HEK293 (cell line): ENCODE measurements at regions of chr15 and their contacts with region 1.

Region 1: DNA sequence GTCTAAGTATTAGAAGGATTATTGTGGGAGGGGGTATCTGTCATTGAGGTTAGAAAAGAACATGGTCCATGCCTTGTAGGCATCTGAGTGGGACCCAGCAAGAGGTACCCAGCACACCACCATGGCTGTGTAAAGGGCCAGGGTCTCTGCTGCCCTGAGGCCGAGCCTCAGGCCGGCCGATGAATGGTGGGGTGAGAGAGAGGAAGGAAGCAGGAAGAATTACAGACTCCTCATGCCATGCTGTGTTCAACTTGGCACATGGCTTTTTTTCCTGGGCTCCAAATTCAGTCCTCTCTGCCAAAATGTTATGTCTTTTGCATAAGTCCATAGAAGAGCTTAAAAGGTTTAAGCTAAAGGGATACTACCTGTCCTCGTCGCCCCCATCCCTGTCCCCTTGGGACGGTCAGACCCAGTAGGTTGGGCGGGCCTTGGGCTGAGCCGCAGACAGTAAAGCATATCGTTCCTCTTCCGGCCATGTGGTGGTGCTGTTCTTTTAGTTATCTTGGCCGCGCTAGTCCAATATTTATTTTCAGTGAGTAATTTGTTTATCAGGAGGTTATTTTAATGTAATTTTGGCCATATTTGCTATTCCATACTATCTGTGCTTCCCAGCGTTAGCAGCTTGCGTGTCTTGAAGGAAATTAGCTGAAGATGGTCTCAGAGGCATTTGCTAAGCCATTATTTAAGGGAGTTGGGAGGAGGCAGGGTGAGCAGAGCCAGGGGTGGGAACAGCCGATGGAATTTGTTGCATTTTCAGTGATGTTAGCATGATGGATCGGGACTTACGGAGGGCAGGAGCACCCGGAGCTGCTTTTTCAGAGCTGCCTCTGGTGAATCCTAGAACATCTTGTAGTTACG is 152.4 kb downstream of the AGBL1 start:
- H3K4me3 ChIP-seq: no peak overlapping the region
- H3K27ac ChIP-seq: peak overlapping the region; percentile 4; the same call in 1 of the 2 replicates
- H3K4me1 ChIP-seq: peaks cover 6% of the 10 kb centered on the region; the same call in 1 of the 2 replicates
- CTCF ChIP-seq: no peak

Region 2: DNA sequence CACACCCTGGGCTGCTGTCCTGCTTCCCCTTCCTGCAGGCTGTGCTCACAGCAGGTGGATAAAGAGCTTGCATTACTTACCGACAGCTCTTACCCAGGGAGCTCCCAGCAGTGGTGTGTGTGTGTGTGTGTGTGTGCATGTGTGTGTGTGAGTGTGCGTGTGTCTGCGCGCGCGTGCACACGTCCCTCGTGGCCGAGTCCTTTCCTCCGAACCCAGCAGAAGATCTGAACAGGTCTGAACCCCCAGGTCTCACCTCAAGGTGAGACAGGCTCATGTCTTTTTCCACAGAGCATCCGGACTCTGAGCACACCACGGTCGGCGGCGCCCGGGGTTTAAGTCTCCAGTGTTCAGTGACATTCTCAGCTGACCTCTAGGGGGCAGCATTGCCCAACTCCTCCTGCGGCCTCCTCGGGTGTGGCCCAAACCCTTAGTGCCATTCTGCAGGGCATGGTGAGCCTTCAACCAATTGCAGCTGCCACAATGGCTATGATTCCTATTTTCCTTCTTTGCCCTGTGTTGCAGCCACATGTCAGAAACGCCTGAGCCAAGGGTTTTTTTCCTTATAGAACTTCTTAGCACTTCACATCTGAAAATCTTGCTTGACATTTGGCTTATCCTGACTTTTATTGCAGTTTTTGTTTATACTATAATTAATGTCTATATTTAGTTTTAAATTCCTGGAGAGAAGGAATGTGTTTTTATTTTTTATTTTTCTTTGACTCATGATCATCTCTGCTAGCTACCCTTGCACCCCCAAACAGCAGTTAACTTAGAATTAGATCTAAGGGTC is 373.3 kb before region 1 on chr15:
- CTCF ChIA-PET with region 1: interaction called, 13 read pairs
- POLR2A ChIA-PET with region 1: no interaction called
- H3K4me3 ChIP-seq: peak overlapping the region; percentile 14
- H3K27ac ChIP-seq: no peak overlapping the region
- H3K4me1 ChIP-seq: no peaks in the 10 kb centered on the region
- CTCF ChIP-seq: peak; percentile 85

Region 3: GRCh38 chr15:86115144-86115801 is 116.8 kb before region 1 on chr15:
- CTCF ChIA-PET with region 1: interaction called, 11 read pairs
- POLR2A ChIA-PET with region 1: no interaction called
- H3K4me3 ChIP-seq: no peak overlapping the region
- H3K27ac ChIP-seq: no peak overlapping the region
- H3K4me1 ChIP-seq: no peaks in the 10 kb centered on the region
- CTCF ChIP-seq: no peak

Region 4: GRCh38 chr15:86221119-86221518 is 11.0 kb before region 1 on chr15:
- CTCF ChIA-PET with region 1: interaction called, 22 read pairs
- POLR2A ChIA-PET with region 1: no interaction called
- H3K4me3 ChIP-seq: no peak overlapping the region
- H3K27ac ChIP-seq: no peak overlapping the region
- H3K4me1 ChIP-seq: no peaks in the 10 kb centered on the region
- CTCF ChIP-seq: no peak

Region 5: GRCh38 chr15:86247249-86247955 is 15.3 kb after region 1 on chr15:
- CTCF ChIA-PET with region 1: interaction called, 13 read pairs
- POLR2A ChIA-PET with region 1: no interaction called
- H3K4me3 ChIP-seq: no peak overlapping the region
- H3K27ac ChIP-seq: no peak overlapping the region
- H3K4me1 ChIP-seq: no peaks in the 10 kb centered on the region
- CTCF ChIP-seq: no peak

Region 6: DNA sequence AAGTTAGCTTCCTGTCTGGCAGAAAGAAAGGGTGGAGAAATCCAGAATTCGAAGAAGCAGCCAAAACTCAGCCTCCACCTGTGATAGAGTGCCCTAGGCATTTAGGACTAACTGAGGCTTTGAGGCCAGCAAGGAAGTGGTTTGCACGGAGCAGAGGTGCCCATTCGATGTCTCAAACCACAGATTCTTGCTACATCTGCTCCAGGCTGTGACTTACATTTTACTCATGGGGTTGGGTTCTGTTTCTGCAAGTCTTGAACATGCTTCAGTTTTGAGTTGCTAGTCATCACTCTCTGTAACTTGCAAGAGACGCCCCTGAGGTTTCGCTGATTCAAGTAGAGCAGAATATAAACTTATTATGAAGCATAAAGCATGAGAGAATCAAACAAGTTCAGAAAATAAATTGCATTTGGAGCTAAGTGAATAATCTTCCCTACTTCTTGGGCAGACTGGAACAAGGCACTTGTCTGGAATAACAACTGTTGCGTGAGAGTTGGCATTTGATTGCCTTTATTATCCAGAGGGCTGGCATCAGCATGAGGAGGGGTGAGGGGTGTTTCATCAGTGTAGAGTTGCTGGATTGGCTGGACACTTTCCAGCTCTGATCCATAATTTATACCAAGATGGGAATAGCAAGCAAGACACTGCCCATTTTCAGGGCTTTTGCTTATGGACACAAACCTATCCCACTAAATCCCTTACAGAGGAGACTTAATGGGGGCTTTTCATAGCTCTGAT is 104.1 kb after region 1 on chr15:
- CTCF ChIA-PET with region 1: no interaction called
- POLR2A ChIA-PET with region 1: no interaction called
- H3K4me3 ChIP-seq: no peak overlapping the region
- H3K27ac ChIP-seq: no peak overlapping the region
- H3K4me1 ChIP-seq: no peaks in the 10 kb centered on the region
- CTCF ChIP-seq: no peak

Region 7: GRCh38 chr15:86743283-86743903 is 511.3 kb after region 1 on chr15:
- CTCF ChIA-PET with region 1: interaction called, 15 read pairs
- POLR2A ChIA-PET with region 1: no interaction called
- H3K4me3 ChIP-seq: no peak overlapping the region
- H3K27ac ChIP-seq: no peak overlapping the region
- H3K4me1 ChIP-seq: no peaks in the 10 kb centered on the region; the same call in 1 of the 2 replicates
- CTCF ChIP-seq: no peak